Heart right ventricle (tissue), 16 donors: ENCODE measurements at regions of chr17 and their contacts with region 1.

Region 1: GRCh38 chr17:65660947-65661346 is 99.5 kb upstream of the AXIN2 start:
- DNase-seq: no peak
- ATAC-seq: no peak
- H3K4me3 ChIP-seq: no peak overlapping the region
- H3K27ac ChIP-seq: no peak overlapping the region
- H3K4me1 ChIP-seq: no peaks in the 10 kb centered on the region
- H3K27me3 ChIP-seq: no peaks in the 10 kb centered on the region
- CTCF ChIP-seq: no peak

Region 2: GRCh38 chr17:65438708-65439294 is 222.1 kb before region 1 on chr17:
- intact Hi-C with region 1: no loop called
- DNase-seq: no peak
- ATAC-seq: no peak
- H3K4me3 ChIP-seq: no peak overlapping the region
- H3K27ac ChIP-seq: no peak overlapping the region
- H3K4me1 ChIP-seq: no peaks in the 10 kb centered on the region
- H3K27me3 ChIP-seq: peaks cover 0 to 36% (median 7%) of the 10 kb centered on the region in 7 donors
- CTCF ChIP-seq: no peak

Region 3: DNA sequence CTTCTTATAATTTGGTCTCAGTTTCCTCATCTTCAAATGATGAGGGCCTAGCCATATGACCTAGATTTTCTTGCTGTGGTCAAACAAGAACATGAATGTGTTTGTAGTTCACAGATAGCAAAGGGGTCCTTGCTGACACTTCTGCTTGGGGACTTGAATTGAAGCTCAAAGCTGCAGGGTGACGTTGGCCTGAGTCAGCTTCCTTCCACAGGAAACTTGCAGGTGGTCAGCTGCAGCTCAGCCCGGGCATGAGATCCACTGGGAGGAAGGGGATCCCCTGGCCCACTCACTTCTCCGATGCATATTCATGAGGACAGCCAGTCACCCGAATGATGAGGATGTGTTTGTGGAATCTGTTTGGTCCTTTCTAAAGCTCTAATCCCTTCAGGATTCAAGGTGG is 56.9 kb before region 1 on chr17:
- intact Hi-C with region 1: no loop called
- DNase-seq: no peak
- ATAC-seq: peak in 1 of 8 donors; percentile 55
- H3K4me3 ChIP-seq: no peak overlapping the region
- H3K27ac ChIP-seq: no peak overlapping the region
- H3K4me1 ChIP-seq: peaks cover 0 to 6% (median 0%) of the 10 kb centered on the region in 9 donors
- H3K27me3 ChIP-seq: no peaks in the 10 kb centered on the region
- CTCF ChIP-seq: no peak

Region 4: GRCh38 chr17:65723385-65724151 is 62.6 kb after region 1 on chr17:
- intact Hi-C with region 1: loop called in 1 of 10 experiments (anchors 10 kb)
- DNase-seq: no peak
- ATAC-seq: no peak
- H3K4me3 ChIP-seq: no peak overlapping the region
- H3K27ac ChIP-seq: no peak overlapping the region
- H3K4me1 ChIP-seq: no peaks in the 10 kb centered on the region
- H3K27me3 ChIP-seq: no peaks in the 10 kb centered on the region
- CTCF ChIP-seq: no peak